Transverse colon (tissue), 4 donors: ENCODE measurements at regions of chr3 and their contacts with region 1.

Region 1: DNA sequence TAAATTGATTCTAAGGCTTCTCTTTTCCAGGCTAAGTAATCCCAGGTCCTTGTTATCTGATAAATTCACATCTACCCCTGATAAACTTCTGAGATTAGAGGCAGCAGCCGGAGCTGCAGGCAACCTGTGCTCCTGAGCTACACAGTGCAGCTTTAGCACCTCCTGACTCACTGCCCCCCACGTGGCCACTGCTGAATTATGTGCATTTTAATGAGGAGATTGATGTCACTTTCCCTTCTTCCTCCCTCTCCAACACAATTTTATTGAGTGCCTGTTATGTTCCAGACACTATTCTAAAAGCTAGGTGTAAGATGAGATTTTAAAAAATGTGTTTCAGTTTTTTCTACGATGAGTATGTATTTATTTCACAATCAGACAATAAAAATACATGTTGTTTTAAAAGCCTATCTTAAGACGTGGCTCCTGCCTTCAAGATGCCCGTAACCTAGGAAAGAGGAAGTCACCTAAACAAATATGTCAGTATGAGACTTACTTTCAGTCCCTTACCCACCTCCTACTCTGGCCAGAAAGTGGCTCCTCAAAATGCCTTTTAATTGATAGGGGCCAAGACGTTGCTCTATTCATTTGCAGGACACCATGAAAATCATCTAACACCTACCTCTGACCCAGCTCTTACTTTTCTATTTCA is 161.5 kb upstream of the PFN2 start:
- DNase-seq: no peak
- H3K4me3 ChIP-seq: no peak overlapping the region
- H3K27ac ChIP-seq: no peak overlapping the region
- H3K4me1 ChIP-seq: no peaks in the 10 kb centered on the region
- H3K27me3 ChIP-seq: no peaks in the 10 kb centered on the region
- CTCF ChIP-seq: no peak
- EP300 ChIP-seq: no peak
- POLR2A ChIP-seq: no peak

Region 2: GRCh38 chr3:149832086-149832485 is 300.1 kb before region 1 on chr3:
- in situ Hi-C with region 1: no loop called
- intact Hi-C with region 1: no loop called
- DNase-seq: no peak
- H3K4me3 ChIP-seq: no peak overlapping the region
- H3K27ac ChIP-seq: no peak overlapping the region
- H3K4me1 ChIP-seq: no peaks in the 10 kb centered on the region
- H3K27me3 ChIP-seq: no peaks in the 10 kb centered on the region
- CTCF ChIP-seq: no peak
- EP300 ChIP-seq: no peak
- POLR2A ChIP-seq: no peak

Region 3: GRCh38 chr3:149879872-149880271 is 252.4 kb before region 1 on chr3:
- in situ Hi-C with region 1: no loop called
- intact Hi-C with region 1: no loop called
- DNase-seq: peak; percentile 39
- H3K4me3 ChIP-seq: no peak overlapping the region
- H3K27ac ChIP-seq: no peak overlapping the region
- H3K4me1 ChIP-seq: no peaks in the 10 kb centered on the region
- H3K27me3 ChIP-seq: no peaks in the 10 kb centered on the region
- CTCF ChIP-seq: peak in 3 of 5 experiments; percentile 26 to 43 (median 28)
- EP300 ChIP-seq: no peak
- POLR2A ChIP-seq: no peak

Region 4: DNA sequence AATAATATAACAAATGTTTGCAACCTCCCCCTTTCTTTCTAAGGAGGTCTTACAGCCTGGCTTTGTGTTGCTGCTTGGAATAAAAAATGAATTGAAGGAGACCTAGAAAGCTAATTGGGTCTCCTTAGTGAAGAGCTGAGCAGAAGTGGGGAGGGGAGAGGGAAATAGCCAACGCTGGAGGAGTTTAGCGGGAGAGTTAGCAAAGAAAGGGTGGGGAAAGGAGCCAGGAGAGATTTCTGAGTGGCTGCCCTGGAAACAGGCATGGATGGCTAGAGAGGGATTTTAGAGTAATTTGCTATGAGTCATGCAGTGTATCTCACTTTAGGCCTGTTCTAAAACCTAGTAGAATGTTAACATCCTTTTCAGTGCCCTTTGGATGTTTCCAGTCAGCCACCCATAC is 116.3 kb before region 1 on chr3:
- in situ Hi-C with region 1: no loop called
- intact Hi-C with region 1: loop called (anchors 10 kb)
- DNase-seq: no peak
- H3K4me3 ChIP-seq: no peak overlapping the region
- H3K27ac ChIP-seq: no peak overlapping the region
- H3K4me1 ChIP-seq: no peaks in the 10 kb centered on the region
- H3K27me3 ChIP-seq: no peaks in the 10 kb centered on the region
- CTCF ChIP-seq: no peak
- EP300 ChIP-seq: no peak
- POLR2A ChIP-seq: no peak